GM12878 (cell line): ENCODE measurements at regions of chr13 and their contacts with region 1.

Region 1: GRCh38 chr13:59043016-59043415 is 1120.7 kb downstream of the DIAPH3 start:
- DNase-seq: no peak
- ATAC-seq: no peak; the same call in 2 of the 3 replicates
- H3K4me3 ChIP-seq: no peak overlapping the region
- H3K27ac ChIP-seq: no peak overlapping the region
- H3K4me1 ChIP-seq: no peaks in the 10 kb centered on the region
- H3K27me3 ChIP-seq: no peaks in the 10 kb centered on the region
- CTCF ChIP-seq: no peak
- EP300 ChIP-seq: no peak
- POLR2A ChIP-seq: no peak
- RAD21 ChIP-seq: no peak

Region 2: GRCh38 chr13:58804832-58805231 is 238.2 kb before region 1 on chr13:
- CTCF ChIA-PET with region 1: no interaction called
- POLR2A ChIA-PET with region 1: no interaction called
- RAD21 ChIA-PET with region 1: no interaction called
- SMC1A ChIA-PET with region 1: no interaction called
- in situ Hi-C with region 1: no loop called
- intact Hi-C with region 1: no loop called
- DNase-seq: no peak
- ATAC-seq: no peak
- H3K4me3 ChIP-seq: no peak overlapping the region
- H3K27ac ChIP-seq: no peak overlapping the region
- H3K4me1 ChIP-seq: no peaks in the 10 kb centered on the region
- H3K27me3 ChIP-seq: no peaks in the 10 kb centered on the region
- CTCF ChIP-seq: no peak
- EP300 ChIP-seq: no peak
- POLR2A ChIP-seq: no peak
- RAD21 ChIP-seq: no peak

Region 3: DNA sequence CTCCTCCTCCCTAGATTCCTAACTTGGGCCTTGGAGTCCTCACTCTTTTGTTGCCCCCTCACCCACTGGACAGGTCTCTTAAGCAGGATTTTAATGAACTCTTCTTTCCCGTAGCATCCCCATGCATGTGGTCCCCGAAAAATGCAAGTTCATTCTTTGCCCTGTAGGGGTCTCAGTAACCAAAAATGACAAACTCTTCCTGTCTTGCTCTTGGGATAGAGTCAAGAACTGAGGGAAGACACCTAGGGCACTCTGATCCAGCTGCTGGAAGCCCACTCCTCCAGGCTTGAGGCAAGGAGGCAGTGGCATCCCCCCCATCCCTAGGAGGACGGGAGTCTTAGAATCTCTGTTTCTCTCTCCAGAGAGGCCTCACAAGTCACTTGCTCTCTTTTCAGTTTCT is 133.8 kb after region 1 on chr13:
- CTCF ChIA-PET with region 1: no interaction called
- POLR2A ChIA-PET with region 1: no interaction called
- RAD21 ChIA-PET with region 1: no interaction called
- SMC1A ChIA-PET with region 1: no interaction called
- in situ Hi-C with region 1: no loop called
- intact Hi-C with region 1: no loop called
- DNase-seq: no peak
- ATAC-seq: no peak
- H3K4me3 ChIP-seq: no peak overlapping the region
- H3K27ac ChIP-seq: no peak overlapping the region
- H3K4me1 ChIP-seq: no peaks in the 10 kb centered on the region
- H3K27me3 ChIP-seq: no peaks in the 10 kb centered on the region
- CTCF ChIP-seq: peak; percentile 5 to 34 (median 33); a peak in 3 of 6 replicates
- EP300 ChIP-seq: no peak
- POLR2A ChIP-seq: no peak
- RAD21 ChIP-seq: no peak

Region 4: DNA sequence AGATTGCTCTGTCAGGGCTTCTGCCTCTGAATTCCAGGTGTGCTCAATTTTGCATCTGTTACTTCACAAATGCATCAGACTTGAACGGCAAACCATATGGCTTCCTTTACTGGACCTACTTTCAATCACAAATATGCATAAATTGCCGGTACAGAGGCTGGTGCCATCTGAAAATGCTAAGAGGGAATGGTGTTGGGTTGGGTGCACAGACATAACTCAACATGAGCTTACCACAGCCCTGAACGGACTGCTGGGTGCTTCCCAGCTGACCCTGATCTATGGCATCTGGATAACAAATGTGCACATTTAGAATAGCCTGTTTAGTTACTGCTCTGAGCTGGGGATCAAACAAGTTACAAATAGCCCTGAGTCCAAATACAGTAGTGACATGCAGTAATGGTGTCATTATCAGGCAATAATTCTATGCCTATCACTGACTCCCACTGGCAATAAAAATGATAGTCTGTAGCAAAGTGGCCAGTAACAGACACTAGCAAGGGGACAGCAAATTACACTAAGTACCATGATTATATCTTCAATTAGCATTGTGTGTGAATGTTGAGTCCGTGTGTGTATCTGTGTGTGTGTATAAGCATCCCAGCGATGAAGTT is 193.4 kb after region 1 on chr13:
- CTCF ChIA-PET with region 1: no interaction called
- POLR2A ChIA-PET with region 1: no interaction called
- RAD21 ChIA-PET with region 1: no interaction called
- SMC1A ChIA-PET with region 1: no interaction called
- in situ Hi-C with region 1: no loop called
- intact Hi-C with region 1: no loop called
- DNase-seq: no peak
- ATAC-seq: no peak
- H3K4me3 ChIP-seq: no peak overlapping the region
- H3K27ac ChIP-seq: no peak overlapping the region
- H3K4me1 ChIP-seq: no peaks in the 10 kb centered on the region
- H3K27me3 ChIP-seq: no peaks in the 10 kb centered on the region
- CTCF ChIP-seq: no peak
- EP300 ChIP-seq: no peak
- POLR2A ChIP-seq: no peak
- RAD21 ChIP-seq: no peak

Region 5: DNA sequence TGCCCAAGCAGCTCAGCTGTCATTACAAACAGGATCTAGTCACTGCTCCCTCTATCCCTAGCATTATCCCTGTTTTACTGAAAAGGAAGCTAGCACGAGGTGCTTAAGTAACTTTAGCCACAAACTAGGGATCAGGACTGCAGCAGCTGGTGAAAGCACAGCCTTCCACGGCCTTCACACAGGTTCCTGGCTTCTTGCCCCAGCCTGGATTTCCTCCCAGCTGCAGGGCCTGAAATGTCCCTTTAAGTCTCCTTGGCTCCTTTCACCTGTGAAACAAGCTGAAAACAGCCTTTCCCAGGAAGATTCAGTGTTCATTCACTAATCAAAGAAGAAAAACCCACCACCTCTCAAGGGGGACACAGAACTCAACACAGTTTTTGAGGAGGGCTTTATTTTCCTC is 366.2 kb after region 1 on chr13:
- CTCF ChIA-PET with region 1: interaction called, 12 read pairs
- POLR2A ChIA-PET with region 1: no interaction called
- RAD21 ChIA-PET with region 1: no interaction called
- SMC1A ChIA-PET with region 1: no interaction called
- in situ Hi-C with region 1: no loop called
- intact Hi-C with region 1: no loop called
- DNase-seq: no peak
- ATAC-seq: no peak
- H3K4me3 ChIP-seq: no peak overlapping the region
- H3K27ac ChIP-seq: no peak overlapping the region
- H3K4me1 ChIP-seq: no peaks in the 10 kb centered on the region
- H3K27me3 ChIP-seq: no peaks in the 10 kb centered on the region
- CTCF ChIP-seq: no peak
- EP300 ChIP-seq: no peak
- POLR2A ChIP-seq: no peak
- RAD21 ChIP-seq: no peak